Naive thymus-derived CD4-positive, alpha-beta T cell (primary cell): ENCODE measurements at regions of chr1 and their contacts with region 1.

Region 1: DNA sequence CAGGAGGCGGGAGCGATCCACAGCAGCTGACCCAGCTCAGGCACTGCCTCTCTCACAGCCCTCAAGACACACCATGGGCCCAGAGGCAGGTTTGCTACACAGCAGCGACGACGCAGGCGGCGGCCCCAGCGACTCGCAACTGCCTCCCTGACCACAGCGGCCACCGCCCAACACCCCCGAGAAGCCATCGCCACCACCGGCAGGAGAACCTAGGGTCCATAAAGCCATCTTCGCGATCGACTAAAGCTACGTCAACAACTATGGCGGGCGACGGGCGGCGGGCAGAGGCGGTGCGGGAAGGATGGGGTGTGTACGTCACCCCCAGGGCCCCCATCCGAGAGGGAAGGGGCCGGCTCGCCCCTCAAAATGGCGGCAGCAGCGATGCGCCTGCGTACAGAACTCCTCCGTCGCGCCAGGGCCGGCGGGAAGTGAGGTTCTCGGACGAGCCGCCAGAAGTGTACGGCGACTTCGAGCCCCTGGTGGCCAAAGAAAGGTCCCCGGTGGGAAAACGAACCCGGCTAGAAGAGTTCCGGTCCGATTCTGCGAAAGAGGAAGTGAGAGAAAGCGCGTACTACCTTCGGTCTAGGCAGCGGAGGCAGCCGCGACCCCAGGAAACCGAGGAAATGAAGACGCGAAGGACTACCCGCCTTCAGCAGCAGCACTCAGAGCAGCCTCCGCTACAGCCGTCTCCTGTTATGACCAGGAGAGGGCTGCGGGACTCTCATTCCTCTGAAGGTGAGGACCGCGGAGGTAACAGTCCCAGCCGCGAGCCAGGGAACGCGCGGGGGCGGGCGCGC is at the start of gene TOR1AIP1:
- DNase-seq: peak; percentile 91 to 98 (median 98)
- ATAC-seq: peak; percentile 87
- H3K4me3 ChIP-seq: peak within 1 kb of the TSS; percentile 96
- H3K4me3 Mint-ChIP-seq: peak within 1 kb of the TSS; percentile 93 to 99 (median 97)
- H3K27ac ChIP-seq: peak within 1 kb of the TSS; percentile 98
- H3K27ac Mint-ChIP-seq: peak within 1 kb of the TSS; percentile 99 to 100 (median 100)
- H3K4me1 ChIP-seq: peaks cover 27 to 37% of the 10 kb centered on the region in 2 donors
- H3K4me1 Mint-ChIP-seq: peaks cover 27 to 79% (median 63%) of the 10 kb centered on the region in 7 donors
- H3K27me3 ChIP-seq: no peaks in the 10 kb centered on the region
- H3K27me3 Mint-ChIP-seq: no peaks in the 10 kb centered on the region
- total RNA-seq, gene TOR1AIP1: 47.4 to 88.6 (median 59.5) TPM

Region 2: GRCh38 chr1:178725603-178726517 is 1156.6 kb before region 1 on chr1:
- CTCF ChIA-PET with region 1: no interaction called
- POLR2A ChIA-PET with region 1: no interaction called
- intact Hi-C with region 1: loop called in 1 of 2 experiments (anchors 2 kb)
- DNase-seq: peak; percentile 25 to 83 (median 73)
- ATAC-seq: peak; percentile 85
- H3K4me3 ChIP-seq: peak overlapping the region; percentile 93
- H3K4me3 Mint-ChIP-seq: peak overlapping the region; percentile 79 to 96 (median 88)
- H3K27ac ChIP-seq: peak overlapping the region; percentile 86
- H3K27ac Mint-ChIP-seq: peak overlapping the region; percentile 14 to 95 (median 88)
- H3K4me1 ChIP-seq: peaks cover 0 to 5% of the 10 kb centered on the region in 2 donors
- H3K4me1 Mint-ChIP-seq: peaks cover 11 to 39% (median 27%) of the 10 kb centered on the region in 7 donors
- H3K27me3 ChIP-seq: no peaks in the 10 kb centered on the region
- H3K27me3 Mint-ChIP-seq: peaks cover 0 to 29% (median 0%) of the 10 kb centered on the region in 5 donors

Region 3: GRCh38 chr1:179293340-179294327 is 588.8 kb before region 1 on chr1 and contains the start of gene SOAT1:
- CTCF ChIA-PET with region 1: no interaction called
- POLR2A ChIA-PET with region 1: no interaction called
- intact Hi-C with region 1: loop called in 1 of 2 experiments (anchors 2 kb)
- DNase-seq: peak; percentile 85 to 94 (median 90)
- ATAC-seq: peak; percentile 98
- H3K4me3 ChIP-seq: peak within 1 kb of the TSS; percentile 78
- H3K4me3 Mint-ChIP-seq: peak within 1 kb of the TSS; percentile 83 to 97 (median 92)
- H3K27ac ChIP-seq: peak within 1 kb of the TSS; percentile 96
- H3K27ac Mint-ChIP-seq: peak within 1 kb of the TSS; percentile 79 to 97 (median 93)
- H3K4me1 ChIP-seq: peaks cover 21 to 33% of the 10 kb centered on the region in 2 donors
- H3K4me1 Mint-ChIP-seq: peaks cover 28 to 51% (median 45%) of the 10 kb centered on the region in 7 donors
- H3K27me3 ChIP-seq: no peaks in the 10 kb centered on the region
- H3K27me3 Mint-ChIP-seq: no peaks in the 10 kb centered on the region
- total RNA-seq, gene SOAT1: 40.6 to 52.8 (median 45.0) TPM

Region 4: GRCh38 chr1:179601093-179601492 is 281.3 kb before region 1 on chr1:
- CTCF ChIA-PET with region 1: no interaction called
- POLR2A ChIA-PET with region 1: no interaction called
- intact Hi-C with region 1: no loop called
- DNase-seq: no peak
- ATAC-seq: no peak
- H3K4me3 ChIP-seq: no peak overlapping the region
- H3K4me3 Mint-ChIP-seq: no peak overlapping the region
- H3K27ac ChIP-seq: no peak overlapping the region
- H3K27ac Mint-ChIP-seq: no peak overlapping the region
- H3K4me1 ChIP-seq: no peaks in the 10 kb centered on the region
- H3K4me1 Mint-ChIP-seq: no peaks in the 10 kb centered on the region
- H3K27me3 ChIP-seq: no peaks in the 10 kb centered on the region
- H3K27me3 Mint-ChIP-seq: peaks cover 10 to 46% (median 29%) of the 10 kb centered on the region in 5 donors

Region 5: DNA sequence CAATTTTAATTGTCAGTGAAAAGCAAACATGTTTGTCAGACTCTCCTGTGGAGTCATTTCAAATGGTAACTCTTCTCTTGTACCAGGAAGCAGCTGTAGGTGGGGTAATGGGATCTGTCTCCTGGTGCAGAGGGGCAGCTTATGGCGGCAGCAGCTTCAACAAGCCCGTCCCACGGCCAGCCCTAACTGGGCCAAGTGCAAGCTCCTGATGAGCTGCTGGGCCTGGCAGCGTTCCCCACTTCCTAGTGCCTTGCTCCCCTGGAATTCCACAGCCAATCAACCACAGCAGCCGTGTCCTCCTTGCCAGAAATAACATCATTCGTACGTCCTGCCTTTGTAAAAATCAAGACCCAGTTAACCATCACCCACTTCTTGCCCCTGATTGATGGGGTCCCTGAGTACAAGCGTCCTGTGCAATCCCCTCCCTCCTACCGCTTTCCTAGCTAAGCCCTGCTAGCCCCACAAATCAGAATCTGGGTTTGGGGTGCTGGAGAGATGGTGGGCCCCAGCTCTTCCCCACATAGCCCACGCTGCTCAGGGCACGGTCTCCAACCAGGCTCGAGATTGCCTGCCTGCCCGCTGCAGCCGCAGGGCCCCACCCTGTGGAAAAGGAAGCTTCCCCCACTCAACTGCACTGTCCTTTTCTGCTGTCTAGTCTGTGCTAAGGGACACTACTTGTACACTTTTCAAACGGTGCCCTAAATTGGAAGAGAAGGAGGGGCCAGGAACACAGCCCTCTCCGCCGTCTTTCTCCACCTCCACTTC is 66.1 kb before region 1 on chr1:
- CTCF ChIA-PET with region 1: interaction called, 6 read pairs
- POLR2A ChIA-PET with region 1: interaction called, 85 read pairs
- intact Hi-C with region 1: loop called in 1 of 2 experiments (anchors 1 kb)
- DNase-seq: no peak
- ATAC-seq: no peak
- H3K4me3 ChIP-seq: no peak overlapping the region
- H3K4me3 Mint-ChIP-seq: peak overlapping the region; percentile 34 to 98 (median 93)
- H3K27ac ChIP-seq: no peak overlapping the region
- H3K27ac Mint-ChIP-seq: peak overlapping the region in 7 of 9 donors; percentile 87 to 99 (median 95)
- H3K4me1 ChIP-seq: peaks cover 6 to 9% of the 10 kb centered on the region in 2 donors
- H3K4me1 Mint-ChIP-seq: peaks cover 10 to 25% (median 20%) of the 10 kb centered on the region in 7 donors
- H3K27me3 ChIP-seq: no peaks in the 10 kb centered on the region
- H3K27me3 Mint-ChIP-seq: peaks cover 0 to 15% (median 0%) of the 10 kb centered on the region in 5 donors

Region 6: DNA sequence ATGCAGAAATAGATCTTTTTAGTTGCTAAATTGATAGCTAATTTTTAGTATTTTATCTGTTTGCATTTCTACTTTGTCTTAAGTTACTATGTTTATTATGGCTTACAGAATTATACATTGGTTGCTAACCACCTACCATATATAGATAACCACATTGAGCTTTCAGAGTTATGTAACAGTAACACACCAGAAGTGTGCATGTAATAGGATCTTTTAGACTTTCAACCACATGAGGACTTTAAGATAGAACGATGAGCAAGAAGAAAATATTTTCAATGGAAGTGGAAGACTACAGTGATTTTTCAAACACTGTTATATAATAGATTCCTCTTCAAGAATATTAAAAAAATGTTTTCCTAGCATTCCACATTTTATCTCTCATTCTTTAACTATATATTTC is 28.5 kb after region 1 on chr1:
- CTCF ChIA-PET with region 1: no interaction called
- POLR2A ChIA-PET with region 1: interaction called, 6 read pairs
- intact Hi-C with region 1: loop called in 1 of 2 experiments (anchors 2 kb)
- DNase-seq: no peak
- ATAC-seq: no peak
- H3K4me3 ChIP-seq: no peak overlapping the region
- H3K4me3 Mint-ChIP-seq: no peak overlapping the region
- H3K27ac ChIP-seq: no peak overlapping the region
- H3K27ac Mint-ChIP-seq: peak overlapping the region in 5 of 9 donors; percentile 1 to 62 (median 9)
- H3K4me1 ChIP-seq: no peaks in the 10 kb centered on the region
- H3K4me1 Mint-ChIP-seq: peaks cover 0 to 15% (median 4%) of the 10 kb centered on the region in 7 donors
- H3K27me3 ChIP-seq: no peaks in the 10 kb centered on the region
- H3K27me3 Mint-ChIP-seq: no peaks in the 10 kb centered on the region

Region 7: GRCh38 chr1:180154325-180155181 is 272.1 kb after region 1 on chr1 and contains the start of gene QSOX1:
- CTCF ChIA-PET with region 1: no interaction called
- POLR2A ChIA-PET with region 1: interaction called, 13 read pairs
- intact Hi-C with region 1: loop called (anchors 1 to 2 kb)
- DNase-seq: peak; percentile 81 to 89 (median 86)
- ATAC-seq: peak; percentile 97
- H3K4me3 ChIP-seq: peak within 1 kb of the TSS; percentile 94
- H3K4me3 Mint-ChIP-seq: peak within 1 kb of the TSS; percentile 80 to 99 (median 91)
- H3K27ac ChIP-seq: peak within 1 kb of the TSS; percentile 78
- H3K27ac Mint-ChIP-seq: peak within 1 kb of the TSS; percentile 81 to 95 (median 86)
- H3K4me1 ChIP-seq: peaks cover 7 to 20% of the 10 kb centered on the region in 2 donors
- H3K4me1 Mint-ChIP-seq: peaks cover 24 to 45% (median 37%) of the 10 kb centered on the region in 7 donors
- H3K27me3 ChIP-seq: no peaks in the 10 kb centered on the region
- H3K27me3 Mint-ChIP-seq: no peaks in the 10 kb centered on the region
- total RNA-seq, gene QSOX1: 22.1 to 55.6 (median 25.6) TPM

Region 8: DNA sequence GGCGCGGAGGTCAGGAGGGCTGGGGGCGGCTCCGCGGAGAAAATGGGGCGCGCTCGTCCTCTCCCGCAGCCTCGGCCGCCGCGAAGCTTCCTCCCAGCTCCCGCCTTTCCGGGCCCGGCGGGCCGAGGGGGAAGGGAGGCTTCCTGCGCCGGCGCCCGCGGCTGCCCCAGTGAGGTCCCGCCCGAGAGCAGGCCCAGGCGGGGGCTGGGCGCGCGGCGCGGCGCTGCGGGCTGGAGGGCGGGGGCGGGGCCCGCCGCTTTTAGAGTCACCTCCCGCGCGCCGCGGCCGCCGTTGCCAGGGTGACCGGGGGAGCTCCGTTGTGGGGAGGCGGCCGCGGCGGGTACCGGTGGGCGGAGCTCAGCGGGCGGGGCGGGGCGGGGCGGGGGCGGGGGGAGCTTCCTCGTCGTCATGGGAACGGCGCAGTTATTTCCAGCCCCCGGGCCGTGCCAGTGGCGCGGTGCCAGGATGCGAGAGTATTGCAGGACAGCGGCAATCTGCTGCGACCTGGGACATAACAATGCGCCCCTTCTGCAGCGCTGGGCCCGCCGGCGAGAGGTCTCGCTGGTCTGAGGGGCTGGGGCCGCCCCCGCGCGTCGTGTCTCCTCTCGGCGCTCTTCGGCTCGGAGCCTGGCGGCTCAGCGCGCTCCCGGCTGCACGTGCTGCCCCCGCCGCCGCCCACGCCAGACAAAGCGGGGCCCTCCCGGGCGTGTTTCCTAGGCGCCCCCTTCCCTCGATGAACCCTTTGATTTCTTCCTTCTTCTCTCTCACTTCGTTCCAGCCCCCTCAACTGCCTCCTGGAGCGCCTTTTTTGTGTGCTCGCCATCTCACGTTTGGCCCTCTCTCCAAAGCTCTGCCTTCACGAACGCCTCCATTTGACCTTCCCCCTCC is 1222.9 kb after region 1 on chr1:
- CTCF ChIA-PET with region 1: no interaction called
- POLR2A ChIA-PET with region 1: no interaction called
- intact Hi-C with region 1: loop called in 1 of 2 experiments (anchors 5 kb)
- DNase-seq: peak; percentile 81 to 94 (median 90)
- ATAC-seq: peak; percentile 94
- H3K4me3 ChIP-seq: peak overlapping the region; percentile 61
- H3K4me3 Mint-ChIP-seq: peak overlapping the region; percentile 84 to 96 (median 91)
- H3K27ac ChIP-seq: peak overlapping the region; percentile 85
- H3K27ac Mint-ChIP-seq: peak overlapping the region; percentile 69 to 97 (median 89)
- H3K4me1 ChIP-seq: peaks cover 16 to 20% of the 10 kb centered on the region in 2 donors
- H3K4me1 Mint-ChIP-seq: peaks cover 22 to 76% (median 61%) of the 10 kb centered on the region in 7 donors
- H3K27me3 ChIP-seq: no peaks in the 10 kb centered on the region
- H3K27me3 Mint-ChIP-seq: peaks cover 0 to 43% (median 0%) of the 10 kb centered on the region in 5 donors